ENCODE measurements at regions of chr12 and their contacts with region 1.

Region 1: GRCh38 chr12:591167-592023 is 71.8 kb downstream of the NINJ2 start:
- DNase-seq: peak; percentile 95 to 99 (median 98)
- H3K4me3 ChIP-seq: peak overlapping the region in 3 of 7 experiments; percentile 36 to 40 (median 37)
- H3K27ac ChIP-seq: peak overlapping the region; percentile 72 to 88
- H3K4me1 ChIP-seq: peaks cover 4 to 38% (median 28%) of the 10 kb centered on the region in 4 experiments
- H3K27me3 ChIP-seq: no peaks in the 10 kb centered on the region

Region 2: DNA sequence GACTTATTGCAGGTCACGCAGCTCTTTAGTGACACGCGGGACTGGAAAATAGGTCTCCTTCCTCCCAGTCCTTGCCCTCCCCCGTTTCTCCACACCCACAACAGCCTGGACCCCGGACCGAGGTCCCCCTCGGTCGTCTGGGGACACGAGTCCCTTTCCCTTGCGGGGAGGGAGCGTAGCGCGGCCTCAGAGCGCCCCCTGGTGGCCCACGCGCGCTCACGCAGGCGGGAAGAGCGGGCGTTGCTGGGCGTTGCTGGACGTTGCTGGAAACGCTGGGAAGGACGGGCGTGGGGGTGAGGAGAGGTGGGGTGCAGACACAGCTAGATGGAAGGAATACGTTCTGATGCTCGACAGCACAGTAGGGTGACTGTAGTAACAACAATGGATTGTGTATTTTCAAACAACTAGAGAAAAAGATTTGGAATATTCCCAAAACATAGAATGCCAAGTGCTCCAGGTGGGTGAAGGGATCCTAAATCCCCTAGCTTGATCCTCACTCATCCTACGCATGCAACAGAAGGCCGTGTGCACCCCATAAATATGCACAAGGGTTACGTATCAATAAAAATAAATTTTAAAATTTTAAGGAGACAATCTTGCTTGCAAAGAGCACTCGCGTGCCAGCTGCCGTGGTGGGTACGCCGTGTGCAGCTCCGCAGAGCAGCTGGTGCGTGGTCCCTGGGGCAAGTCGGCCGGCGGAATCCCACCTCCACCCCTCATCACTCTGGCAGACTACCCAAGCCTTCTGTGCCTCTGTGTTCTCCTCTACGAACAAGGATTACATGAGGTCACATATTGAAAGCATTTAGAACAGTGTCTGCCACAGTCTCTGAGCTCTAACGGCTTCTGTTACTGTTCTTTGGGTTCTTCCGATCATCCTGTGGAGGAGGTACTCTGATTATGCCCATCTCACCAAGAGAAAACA is 44.2 kb before region 1 on chr12:
- CTCF ChIA-PET with region 1: no interaction called
- POLR2A ChIA-PET with region 1: no interaction called
- DNase-seq: peak; percentile 55 to 69 (median 67)
- H3K4me3 ChIP-seq: no peak overlapping the region
- H3K27ac ChIP-seq: no peak overlapping the region
- H3K4me1 ChIP-seq: peaks cover 0 to 14% (median 5%) of the 10 kb centered on the region in 4 experiments
- H3K27me3 ChIP-seq: peaks cover 0 to 31% (median 5%) of the 10 kb centered on the region in 5 experiments

Region 3: GRCh38 chr12:575948-576612 is 15.3 kb before region 1 on chr12:
- CTCF ChIA-PET with region 1: interaction called, 22 read pairs
- POLR2A ChIA-PET with region 1: interaction called, 4 read pairs
- DNase-seq: peak; percentile 66 to 86 (median 81)
- H3K4me3 ChIP-seq: peak overlapping the region in 3 of 7 experiments; percentile 34 to 62 (median 40)
- H3K27ac ChIP-seq: peak overlapping the region in 1 of 2 experiments; percentile 14
- H3K4me1 ChIP-seq: peaks cover 0 to 26% (median 16%) of the 10 kb centered on the region in 4 experiments
- H3K27me3 ChIP-seq: no peaks in the 10 kb centered on the region

Region 4: GRCh38 chr12:607526-608001 is 16.2 kb after region 1 on chr12:
- CTCF ChIA-PET with region 1: interaction called, 18 read pairs
- POLR2A ChIA-PET with region 1: interaction called, 7 read pairs
- DNase-seq: no peak
- H3K4me3 ChIP-seq: peak overlapping the region in 1 of 7 experiments; percentile 11
- H3K27ac ChIP-seq: no peak overlapping the region
- H3K4me1 ChIP-seq: peaks cover 13 to 78% (median 65%) of the 10 kb centered on the region in 4 experiments
- H3K27me3 ChIP-seq: no peaks in the 10 kb centered on the region

Measured in common myeloid progenitor, CD34-positive (primary cell).